ENCODE measurements at regions of chr6 and their contacts with region 1.

Region 1: GRCh38 chr6:45411959-45412358 is 34.2 kb upstream of the SUPT3H start:
- DNase-seq: no peak
- H3K4me3 ChIP-seq: no peak overlapping the region
- CTCF ChIP-seq: no peak

Region 2: DNA sequence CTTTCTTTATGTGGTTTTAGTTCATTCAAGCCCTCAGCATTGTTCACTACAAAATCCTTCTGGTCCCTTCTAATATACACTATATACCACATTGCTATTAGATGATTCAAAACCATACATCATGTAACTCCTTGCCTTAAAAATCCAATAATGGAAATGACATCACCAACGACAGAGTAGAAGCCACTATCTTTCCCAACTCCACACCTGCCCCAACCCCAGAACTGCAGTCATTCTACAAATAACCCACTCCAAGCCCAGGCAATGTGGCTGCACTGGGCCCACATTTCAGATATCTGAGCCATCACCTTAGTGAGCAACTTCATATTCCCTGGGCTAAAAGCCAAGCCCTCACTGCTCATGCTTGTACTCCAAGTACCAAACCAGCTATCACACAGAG is 106.4 kb before region 1 on chr6:
- in situ Hi-C with region 1: no loop called
- DNase-seq: no peak
- H3K4me3 ChIP-seq: no peak overlapping the region
- CTCF ChIP-seq: no peak

Region 3: GRCh38 chr6:45327956-45328522 is 83.9 kb before region 1 on chr6 and contains the start of gene RUNX2:
- in situ Hi-C with region 1: loop called (anchors 5 kb)
- DNase-seq: peak; percentile 97
- H3K4me3 ChIP-seq: peak within 1 kb of the TSS; percentile 68
- CTCF ChIP-seq: no peak

Measured in astrocyte of the cerebellum (primary cell).